HepG2 (cell line): ENCODE measurements at regions of chr9 and their contacts with region 1.

Region 1: GRCh38 chr9:136728080-136728547 is 14.6 kb downstream of the LCN10 start:
- DNase-seq: peak; percentile 67
- ATAC-seq: peak; percentile 58
- H3K4me3 ChIP-seq: peak overlapping the region; percentile 75 to 89 (median 89)
- H3K27ac ChIP-seq: peak overlapping the region; percentile 64
- H3K4me1 ChIP-seq: peaks cover 56% of the 10 kb centered on the region
- H3K27me3 ChIP-seq: no peaks in the 10 kb centered on the region; a peak in 1 of 5 replicates
- CTCF ChIP-seq: peak; percentile 90
- EP300 ChIP-seq: 0 out of 4 replicates have a peak, but pooled peaks of 1 of the 2 experiments have one; percentile 24
- POLR2A ChIP-seq: peak in 1 of 2 experiments; percentile 99; a peak in 2 of 4 replicates
- RAD21 ChIP-seq: peak; percentile 77

Region 2: GRCh38 chr9:136713548-136714457 is 14.3 kb before region 1 on chr9:
- CTCF ChIA-PET with region 1: no interaction called
- POLR2A ChIA-PET with region 1: interaction called, 17 read pairs
- in situ Hi-C with region 1: no loop called
- intact Hi-C with region 1: no loop called
- DNase-seq: no peak
- ATAC-seq: no peak
- H3K4me3 ChIP-seq: peak overlapping the region in 2 of 3 experiments; percentile 54 to 66; a peak in 2 of 6 replicates
- H3K27ac ChIP-seq: no peak overlapping the region
- H3K4me1 ChIP-seq: peaks cover 22% of the 10 kb centered on the region
- H3K27me3 ChIP-seq: peaks cover 4 to 35% of the 10 kb centered on the region in 2 experiments; a peak in 3 of 5 replicates
- CTCF ChIP-seq: no peak
- EP300 ChIP-seq: no peak
- POLR2A ChIP-seq: no peak
- RAD21 ChIP-seq: no peak

Region 3: DNA sequence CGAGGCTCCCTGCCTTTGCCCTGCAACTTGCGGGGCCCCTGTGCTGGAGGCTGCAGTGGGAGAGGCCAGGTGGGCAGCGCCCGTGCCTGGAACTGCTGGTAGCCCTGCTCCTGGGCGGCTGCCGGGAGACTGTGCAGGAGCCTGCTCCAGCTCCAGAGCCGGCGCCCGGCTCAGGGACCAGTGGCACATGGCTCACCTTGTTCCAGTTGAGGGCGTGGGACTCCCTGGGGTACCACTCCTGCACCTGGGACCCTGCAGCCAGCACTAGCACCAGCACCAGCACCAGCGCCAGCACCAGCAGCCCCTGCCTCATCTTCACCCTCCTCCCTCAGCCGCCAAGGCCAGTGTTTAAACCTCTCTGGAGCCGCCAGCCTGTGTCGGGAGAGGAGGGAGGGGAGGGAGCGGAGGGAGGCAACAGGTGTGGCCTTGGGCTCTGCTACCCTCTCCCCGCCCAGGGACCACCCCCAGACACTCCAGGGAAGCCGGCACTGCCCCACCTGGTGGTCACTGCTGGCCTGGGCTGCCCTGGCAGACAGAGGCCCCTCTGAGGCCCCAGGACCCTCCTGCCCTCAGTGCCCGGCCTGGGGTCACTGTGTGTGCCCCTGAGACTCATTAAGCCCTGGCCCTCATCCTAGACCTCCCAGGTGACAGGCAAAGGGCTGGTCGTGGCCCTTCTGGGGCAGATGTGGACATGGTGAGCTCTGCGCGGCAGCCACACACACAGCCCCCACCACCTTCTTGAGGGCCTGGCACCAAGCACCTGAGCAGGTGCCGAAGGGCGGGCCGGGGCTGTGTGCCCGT is 14.7 kb after region 1 on chr9 and contains the start of gene LCN10:
- CTCF ChIA-PET with region 1: no interaction called
- POLR2A ChIA-PET with region 1: interaction called, 27 read pairs
- in situ Hi-C with region 1: no loop called
- intact Hi-C with region 1: no loop called
- DNase-seq: peak; percentile 49
- ATAC-seq: peak; percentile 69
- H3K4me3 ChIP-seq: peak within 1 kb of the TSS in 2 of 3 experiments; percentile 6 to 53; a peak in 3 of 6 replicates
- H3K27ac ChIP-seq: no peak within 1 kb of the TSS
- H3K4me1 ChIP-seq: peaks cover 25% of the 10 kb centered on the region
- H3K27me3 ChIP-seq: peaks cover 23 to 88% of the 10 kb centered on the region in 2 experiments
- CTCF ChIP-seq: peak; percentile 78
- EP300 ChIP-seq: no peak
- POLR2A ChIP-seq: no peak
- RAD21 ChIP-seq: no peak
- total RNA-seq, gene LCN10: 0.14 and 0.53 TPM in 2 replicates